OCI-LY7 (cell line): ENCODE measurements at regions of chr3 and their contacts with region 1.

Region 1: DNA sequence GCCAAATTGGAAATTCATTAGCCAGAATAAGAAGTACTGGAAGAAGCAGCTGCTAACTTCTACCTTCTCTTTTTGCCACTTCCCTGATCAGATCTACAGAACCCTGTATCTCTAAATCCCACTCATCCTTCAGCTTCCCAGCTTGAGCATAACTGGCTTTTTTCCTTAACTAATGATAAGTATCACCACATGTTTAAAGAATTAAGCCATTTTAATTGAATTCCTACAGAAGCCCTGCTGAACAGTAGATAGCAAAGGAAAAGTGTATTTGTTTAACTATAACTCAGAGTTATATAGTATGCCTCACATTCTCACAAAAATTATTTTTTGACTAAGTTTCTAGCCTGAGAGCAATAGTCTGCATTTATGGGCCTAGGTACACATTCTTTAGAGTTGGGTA is 262.4 kb downstream of the UBE2E2 start:
- DNase-seq: no peak
- H3K4me3 ChIP-seq: no peak overlapping the region
- H3K27ac ChIP-seq: no peak overlapping the region
- H3K4me1 ChIP-seq: no peaks in the 10 kb centered on the region
- CTCF ChIP-seq: no peak

Region 2: DNA sequence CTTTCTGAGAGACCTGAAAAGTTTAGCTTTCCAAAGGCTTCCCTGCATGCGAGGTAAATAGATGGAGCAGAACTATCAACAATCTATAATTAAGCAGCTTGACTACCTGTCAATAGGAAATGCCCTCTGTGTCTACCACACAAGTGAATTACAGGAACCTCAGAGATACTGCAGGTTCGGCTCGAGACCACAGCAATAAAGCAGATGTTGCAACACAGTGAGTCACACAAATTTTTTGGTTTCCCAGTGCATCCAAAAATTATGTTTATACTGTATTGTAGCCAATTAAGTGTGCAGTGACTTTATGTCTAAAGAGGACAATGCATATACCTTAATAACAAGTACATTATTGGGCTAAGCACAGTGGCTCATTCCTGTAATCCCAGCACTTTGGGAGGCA is 10.5 kb before region 1 on chr3:
- CTCF ChIA-PET with region 1: no interaction called
- POLR2A ChIA-PET with region 1: interaction called, 10 read pairs
- intact Hi-C with region 1: no loop called
- DNase-seq: no peak
- H3K4me3 ChIP-seq: no peak overlapping the region
- H3K27ac ChIP-seq: no peak overlapping the region
- H3K4me1 ChIP-seq: peaks cover 4% of the 10 kb centered on the region
- CTCF ChIP-seq: no peak